BJ (cell line): ENCODE measurements at regions of chr12 and their contacts with region 1.

Region 1: GRCh38 chr12:118404876-118405521 is 28.6 kb downstream of the SUDS3 start:
- DNase-seq: peak; percentile 6
- H3K4me3 ChIP-seq: no peak overlapping the region
- H3K27me3 ChIP-seq: no peaks in the 10 kb centered on the region
- CTCF ChIP-seq: peak; percentile 73

Region 2: DNA sequence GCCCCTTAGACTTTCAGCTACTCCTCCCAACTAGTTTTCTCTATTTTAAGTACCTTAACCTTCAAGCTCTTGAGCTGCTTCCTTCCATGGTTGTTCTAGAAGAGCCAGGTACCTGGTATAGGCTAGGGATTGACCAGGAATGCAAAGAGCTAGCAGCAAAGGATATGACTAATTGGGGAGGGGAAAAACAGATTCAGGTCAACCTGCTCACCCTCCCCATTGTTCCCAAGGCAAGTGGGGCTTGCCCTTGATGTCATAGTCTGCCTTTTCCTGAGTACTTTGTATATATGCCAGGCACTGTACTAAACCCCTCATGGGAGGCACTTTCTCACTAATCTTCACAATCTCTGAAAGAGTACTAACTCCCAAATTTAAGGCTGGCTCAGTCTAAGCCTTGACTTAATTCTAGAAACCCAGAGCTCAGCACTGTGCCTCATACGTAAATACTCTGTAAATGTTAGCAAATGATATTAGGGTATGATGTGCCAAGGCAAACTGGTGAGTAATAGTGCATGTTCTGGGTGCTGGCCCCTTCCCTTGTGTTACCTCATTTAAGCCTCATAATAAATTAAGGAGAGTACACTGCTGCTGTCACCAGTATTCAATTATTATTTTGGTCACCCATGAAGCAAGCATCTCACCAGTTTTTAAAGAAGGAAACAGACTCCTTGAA is 13.5 kb after region 1 on chr12:
- CTCF ChIA-PET with region 1: interaction called, 26 read pairs
- POLR2A ChIA-PET with region 1: no interaction called
- DNase-seq: no peak
- H3K4me3 ChIP-seq: no peak overlapping the region
- H3K27me3 ChIP-seq: no peaks in the 10 kb centered on the region
- CTCF ChIP-seq: no peak

Region 3: DNA sequence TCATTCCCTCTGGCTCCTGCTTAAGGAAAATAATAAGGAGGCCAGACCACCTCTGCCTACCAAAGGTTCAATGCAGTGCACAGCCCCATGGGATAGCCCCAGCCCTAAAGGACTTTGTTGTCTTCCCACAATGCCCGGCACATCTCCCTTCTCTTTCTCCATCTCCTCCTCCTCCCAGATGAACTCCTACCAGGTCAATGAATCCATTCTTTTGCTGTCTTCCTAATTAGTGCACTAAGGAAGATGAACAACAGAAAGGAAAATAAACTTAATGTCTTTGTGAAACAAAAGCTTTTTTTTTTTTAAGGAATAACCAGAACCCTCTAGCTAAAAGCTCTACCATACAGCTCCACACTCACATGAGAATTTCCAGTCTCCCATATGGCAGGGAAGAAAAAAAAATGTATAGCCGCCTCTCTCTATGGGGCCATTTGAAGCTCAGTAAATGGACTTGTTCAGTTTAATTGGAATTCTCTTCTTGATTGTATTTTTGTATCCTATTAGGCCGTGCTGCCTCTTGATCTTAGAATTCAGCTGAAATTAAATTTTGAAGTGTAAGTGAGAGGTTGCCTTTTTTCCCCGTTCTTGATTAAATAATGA is 731.9 kb after region 1 on chr12:
- CTCF ChIA-PET with region 1: no interaction called
- POLR2A ChIA-PET with region 1: no interaction called
- DNase-seq: no peak
- H3K4me3 ChIP-seq: no peak overlapping the region
- H3K27me3 ChIP-seq: no peaks in the 10 kb centered on the region
- CTCF ChIP-seq: no peak